ENCODE measurements at regions of chr20 and their contacts with region 1.

Region 1: DNA sequence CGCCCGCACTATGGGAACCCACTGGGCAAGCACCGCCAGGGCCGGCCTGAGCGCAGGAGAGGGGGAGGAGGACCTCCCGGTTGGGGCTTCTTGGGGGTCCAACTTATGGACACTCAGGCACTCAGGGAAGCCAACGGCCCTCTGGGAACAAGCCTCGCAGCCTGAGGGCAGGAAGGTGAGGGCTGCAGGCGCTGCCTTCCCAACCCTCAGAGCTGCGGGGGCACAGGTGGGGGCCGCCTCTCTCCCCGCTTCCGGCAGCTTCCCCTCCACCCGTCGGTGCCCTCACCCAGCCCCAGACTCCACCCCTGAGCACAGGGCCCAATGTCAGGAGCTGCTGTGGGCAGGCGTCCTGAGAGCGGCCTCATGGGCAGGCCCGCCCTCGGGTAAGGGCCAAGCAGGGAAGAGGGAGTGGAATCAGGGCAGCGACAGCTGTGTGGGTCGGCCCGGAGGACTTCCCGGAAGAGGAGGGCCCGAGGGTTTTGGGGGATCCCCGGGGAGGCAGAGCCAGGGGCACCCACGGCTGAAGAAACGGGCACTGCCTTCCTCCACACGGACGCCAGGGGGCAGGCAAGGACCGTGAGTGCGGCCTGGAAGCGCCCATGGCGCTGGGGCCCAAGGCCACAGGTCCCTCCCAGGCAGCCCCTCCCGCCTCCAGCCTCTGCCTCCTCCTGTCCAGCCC is 488 bp upstream of the PTK6 start:
- DNase-seq: peak; percentile 51
- H3K4me3 ChIP-seq: peak overlapping the region; percentile 44
- CTCF ChIP-seq: peak; percentile 99

Region 2: GRCh38 chr20:63520504-63520933 is 17.1 kb before region 1 on chr20 and contains the start of gene PPDPF:
- CTCF ChIA-PET with region 1: interaction called, 34 read pairs
- POLR2A ChIA-PET with region 1: interaction called, 7 read pairs
- DNase-seq: no peak
- H3K4me3 ChIP-seq: peak within 1 kb of the TSS; percentile 91
- CTCF ChIP-seq: no peak

Region 3: DNA sequence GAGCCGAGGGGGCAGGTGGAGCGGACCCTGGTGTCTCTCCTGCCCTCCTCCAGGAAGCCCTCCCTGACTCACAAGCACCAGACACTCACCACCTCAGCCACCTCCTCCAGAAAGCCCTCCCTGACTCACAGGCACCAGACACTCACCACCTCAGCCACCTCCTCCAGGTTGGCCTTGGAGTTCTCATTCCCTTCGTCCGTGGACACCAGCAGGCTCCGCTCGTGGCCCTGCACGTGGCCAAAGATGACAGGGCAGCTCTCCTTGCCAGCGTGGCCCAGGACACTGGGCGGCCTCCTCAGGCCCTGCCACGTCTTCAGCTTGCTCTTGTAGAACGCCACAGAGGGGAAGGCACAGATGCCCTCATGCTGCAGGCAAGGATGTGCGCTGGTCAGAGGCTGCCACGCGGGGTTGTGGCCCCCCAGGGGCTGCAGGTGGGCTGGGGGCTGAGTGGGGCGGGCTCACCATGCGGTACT is 22.7 kb after region 1 on chr20:
- CTCF ChIA-PET with region 1: no interaction called
- POLR2A ChIA-PET with region 1: no interaction called
- DNase-seq: no peak
- H3K4me3 ChIP-seq: no peak overlapping the region
- CTCF ChIP-seq: no peak

Region 4: DNA sequence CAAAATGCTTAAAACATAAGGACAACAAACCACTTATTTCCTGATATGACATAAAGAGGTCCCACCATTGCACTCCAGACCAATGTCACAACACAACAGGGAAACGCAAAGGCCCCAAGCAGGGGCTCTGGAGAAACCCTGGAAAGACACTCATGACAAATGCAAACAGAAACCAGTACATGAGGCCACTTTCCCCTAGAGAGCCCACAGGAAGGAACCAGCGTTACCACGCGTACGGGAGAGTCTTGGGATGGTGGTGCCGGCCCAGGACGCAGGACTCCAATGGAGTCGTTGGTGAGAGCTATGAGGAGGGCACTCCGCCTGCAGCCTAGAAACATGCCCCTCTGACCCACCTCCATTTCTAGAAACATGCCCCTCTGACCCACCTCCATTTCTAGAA is 69.0 kb after region 1 on chr20:
- CTCF ChIA-PET with region 1: no interaction called
- POLR2A ChIA-PET with region 1: no interaction called
- DNase-seq: no peak
- H3K4me3 ChIP-seq: no peak overlapping the region
- CTCF ChIP-seq: no peak

Region 5: GRCh38 chr20:63682384-63683139 is 144.9 kb after region 1 on chr20:
- CTCF ChIA-PET with region 1: interaction called, 10 read pairs
- POLR2A ChIA-PET with region 1: no interaction called
- DNase-seq: peak; percentile 80
- H3K4me3 ChIP-seq: no peak overlapping the region
- CTCF ChIP-seq: no peak

Region 6: DNA sequence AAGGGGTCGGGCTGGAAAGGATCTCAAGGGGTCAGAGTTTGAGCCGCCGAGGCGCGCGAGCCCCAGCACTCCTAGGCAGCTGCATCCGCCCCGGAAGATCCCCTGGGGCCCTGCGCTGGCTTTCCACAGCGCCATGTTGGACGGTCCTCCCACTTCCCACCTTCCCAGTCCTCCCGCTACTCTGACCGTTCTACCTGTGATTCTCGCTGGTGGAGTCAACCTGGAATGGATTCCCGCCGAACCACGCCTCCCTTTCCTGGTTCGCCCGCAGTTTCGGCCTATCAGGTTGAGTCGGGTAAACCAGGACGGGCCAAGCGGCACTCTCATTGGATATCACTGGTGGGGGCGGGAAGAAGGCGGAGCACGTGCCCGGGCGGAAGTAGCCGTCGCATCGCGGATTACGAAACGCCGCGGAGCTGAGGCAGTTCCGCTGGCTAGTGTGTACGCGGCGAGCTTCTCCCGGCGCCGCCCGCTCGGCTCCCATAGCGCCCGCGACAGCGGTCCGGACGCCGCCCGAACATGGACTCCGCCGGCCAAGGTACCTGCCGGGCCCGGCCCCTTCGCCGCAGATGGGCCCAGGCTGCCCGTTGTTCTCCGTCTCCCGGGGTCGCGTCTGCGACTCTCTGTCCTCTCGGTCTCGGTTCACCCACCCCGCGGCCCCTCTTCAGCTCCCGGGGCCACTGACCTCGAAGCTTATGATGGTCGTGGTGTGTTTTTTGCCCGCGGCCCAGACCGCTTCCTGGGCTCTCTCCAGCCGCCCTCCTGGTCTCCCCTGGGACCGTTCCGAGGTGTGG is 327.4 kb after region 1 on chr20 and contains the start of gene TPD52L2:
- CTCF ChIA-PET with region 1: interaction called, 23 read pairs
- POLR2A ChIA-PET with region 1: interaction called, 6 read pairs
- DNase-seq: peak; percentile 77
- H3K4me3 ChIP-seq: peak within 1 kb of the TSS; percentile 96
- CTCF ChIP-seq: no peak

Region 7: GRCh38 chr20:63980806-63981728 is 443.4 kb after region 1 on chr20 and contains the start of gene PRPF6:
- CTCF ChIA-PET with region 1: interaction called, 73 read pairs
- POLR2A ChIA-PET with region 1: no interaction called
- DNase-seq: peak; percentile 44
- H3K4me3 ChIP-seq: peak within 1 kb of the TSS; percentile 99
- CTCF ChIP-seq: peak; percentile 97

Measured in AG04449 (cell line).